Panc1 (cell line): ENCODE measurements at regions of chr7 and their contacts with region 1.

Region 1: GRCh38 chr7:32218154-32218467 is 147.9 kb upstream of the PDE1C start:
- DNase-seq: no peak
- ATAC-seq: no peak
- H3K4me3 ChIP-seq: no peak overlapping the region
- H3K27ac ChIP-seq: no peak overlapping the region
- H3K4me1 ChIP-seq: no peaks in the 10 kb centered on the region
- H3K27me3 ChIP-seq: peaks cover 12% of the 10 kb centered on the region
- CTCF ChIP-seq: no peak

Region 2: GRCh38 chr7:32347244-32347828 is 129.2 kb after region 1 on chr7:
- CTCF ChIA-PET with region 1: interaction called, 17 read pairs
- POLR2A ChIA-PET with region 1: no interaction called
- in situ Hi-C with region 1: no loop called
- intact Hi-C with region 1: no loop called
- DNase-seq: peak; percentile 12
- ATAC-seq: no peak
- H3K4me3 ChIP-seq: no peak overlapping the region
- H3K27ac ChIP-seq: no peak overlapping the region
- H3K4me1 ChIP-seq: no peaks in the 10 kb centered on the region
- H3K27me3 ChIP-seq: no peaks in the 10 kb centered on the region
- CTCF ChIP-seq: peak; percentile 84